BJ (cell line): ENCODE measurements at regions of chr10 and their contacts with region 1.

Region 1: GRCh38 chr10:69515699-69516259 is 57.4 kb downstream of the NEUROG3 start:
- DNase-seq: no peak
- H3K4me3 ChIP-seq: no peak overlapping the region
- H3K27me3 ChIP-seq: peaks cover 12% of the 10 kb centered on the region
- CTCF ChIP-seq: peak; percentile 92

Region 2: GRCh38 chr10:69425511-69426298 is 90.1 kb before region 1 on chr10:
- CTCF ChIA-PET with region 1: interaction called, 112 read pairs
- POLR2A ChIA-PET with region 1: no interaction called
- DNase-seq: no peak
- H3K4me3 ChIP-seq: no peak overlapping the region
- H3K27me3 ChIP-seq: peaks cover 10% of the 10 kb centered on the region
- CTCF ChIP-seq: no peak

Region 3: DNA sequence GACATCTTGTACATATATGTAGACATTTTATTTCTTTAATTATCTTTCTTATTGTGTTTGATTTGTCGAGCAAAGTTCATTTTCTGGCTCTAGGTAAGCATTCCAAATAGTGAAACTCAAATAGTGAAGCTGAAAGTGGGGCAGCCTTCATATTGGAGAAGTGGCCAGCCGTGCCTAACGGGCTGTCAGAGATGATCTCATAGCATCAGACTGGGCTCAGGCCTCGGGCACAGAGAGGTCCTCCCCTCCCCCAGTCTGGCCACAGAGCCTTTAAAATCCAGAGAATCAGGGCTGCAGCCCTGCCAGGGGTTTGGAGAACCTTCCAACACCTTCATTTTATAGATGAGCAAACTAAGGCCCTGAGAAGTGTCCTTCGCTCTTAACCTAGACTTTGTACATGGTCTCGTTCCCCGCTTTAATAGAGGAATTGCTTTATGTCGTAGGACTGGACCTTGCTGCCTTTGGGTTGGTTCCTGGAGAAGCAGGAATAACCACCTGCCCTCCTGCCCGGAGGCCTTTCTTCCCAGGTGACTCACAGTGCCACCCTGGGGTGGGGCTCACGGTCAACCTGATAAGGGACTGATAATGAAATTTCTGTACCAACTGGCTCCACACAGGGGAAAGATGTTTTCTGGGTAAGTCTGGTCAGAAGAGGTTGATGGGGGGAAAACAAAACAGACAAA is 57.2 kb before region 1 on chr10:
- CTCF ChIA-PET with region 1: no interaction called
- POLR2A ChIA-PET with region 1: no interaction called
- DNase-seq: no peak
- H3K4me3 ChIP-seq: no peak overlapping the region
- H3K27me3 ChIP-seq: no peaks in the 10 kb centered on the region
- CTCF ChIP-seq: no peak

Region 4: GRCh38 chr10:69527961-69528360 is 12.2 kb after region 1 on chr10:
- CTCF ChIA-PET with region 1: interaction called, 10 read pairs
- POLR2A ChIA-PET with region 1: no interaction called
- DNase-seq: no peak
- H3K4me3 ChIP-seq: no peak overlapping the region
- H3K27me3 ChIP-seq: peaks cover 5% of the 10 kb centered on the region; the same call in 1 of the 2 replicates
- CTCF ChIP-seq: no peak

Region 5: DNA sequence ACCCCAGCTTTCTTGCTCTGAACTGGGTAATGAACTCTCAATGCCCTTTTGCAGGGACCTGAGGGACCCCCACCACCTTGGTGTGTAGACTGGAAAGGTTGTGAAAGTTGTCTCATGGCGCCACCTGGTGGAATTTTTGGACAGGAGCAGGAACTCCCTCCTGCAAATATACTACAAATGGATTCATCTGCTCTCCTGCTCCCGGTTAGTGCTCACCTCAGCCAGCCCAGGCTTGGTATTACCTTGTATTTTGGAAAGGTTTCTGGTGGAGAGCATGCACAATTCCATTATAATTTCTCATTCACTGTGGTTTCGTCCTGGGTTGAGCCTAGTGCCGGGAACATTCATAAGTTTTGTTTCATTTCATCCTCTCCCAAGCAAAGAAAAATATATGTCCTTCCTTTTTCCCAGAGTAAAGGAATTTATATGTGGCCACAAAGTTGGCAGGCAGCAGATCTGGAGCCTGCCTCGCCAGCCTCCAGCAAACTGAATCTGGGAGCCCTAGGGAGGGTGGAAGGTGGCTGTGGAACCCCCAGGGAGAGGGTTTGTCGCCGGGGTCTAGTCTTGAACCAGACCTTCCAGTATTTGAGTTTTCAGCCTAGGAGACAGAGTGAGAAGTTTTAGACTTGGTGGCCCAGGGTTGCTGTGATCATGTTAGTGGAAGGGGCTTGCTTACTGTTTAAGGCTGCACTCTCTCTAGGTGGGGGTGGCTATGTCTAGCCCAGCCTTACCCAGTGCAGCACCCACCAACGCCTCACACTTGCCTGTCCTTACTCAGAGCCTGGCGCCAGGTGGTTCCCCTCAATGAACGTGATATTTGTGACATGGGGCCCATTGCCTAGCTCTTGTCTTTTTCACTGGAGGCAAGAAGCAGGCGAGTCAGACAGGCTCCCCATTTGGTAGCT is 123.8 kb after region 1 on chr10:
- CTCF ChIA-PET with region 1: interaction called, 268 read pairs
- POLR2A ChIA-PET with region 1: no interaction called
- DNase-seq: no peak
- H3K4me3 ChIP-seq: no peak overlapping the region
- H3K27me3 ChIP-seq: peaks cover 2% of the 10 kb centered on the region
- CTCF ChIP-seq: peak; percentile 83